Aorta (tissue), 5 donors: ENCODE measurements at regions of chr1 and their contacts with region 1.

Region 1: DNA sequence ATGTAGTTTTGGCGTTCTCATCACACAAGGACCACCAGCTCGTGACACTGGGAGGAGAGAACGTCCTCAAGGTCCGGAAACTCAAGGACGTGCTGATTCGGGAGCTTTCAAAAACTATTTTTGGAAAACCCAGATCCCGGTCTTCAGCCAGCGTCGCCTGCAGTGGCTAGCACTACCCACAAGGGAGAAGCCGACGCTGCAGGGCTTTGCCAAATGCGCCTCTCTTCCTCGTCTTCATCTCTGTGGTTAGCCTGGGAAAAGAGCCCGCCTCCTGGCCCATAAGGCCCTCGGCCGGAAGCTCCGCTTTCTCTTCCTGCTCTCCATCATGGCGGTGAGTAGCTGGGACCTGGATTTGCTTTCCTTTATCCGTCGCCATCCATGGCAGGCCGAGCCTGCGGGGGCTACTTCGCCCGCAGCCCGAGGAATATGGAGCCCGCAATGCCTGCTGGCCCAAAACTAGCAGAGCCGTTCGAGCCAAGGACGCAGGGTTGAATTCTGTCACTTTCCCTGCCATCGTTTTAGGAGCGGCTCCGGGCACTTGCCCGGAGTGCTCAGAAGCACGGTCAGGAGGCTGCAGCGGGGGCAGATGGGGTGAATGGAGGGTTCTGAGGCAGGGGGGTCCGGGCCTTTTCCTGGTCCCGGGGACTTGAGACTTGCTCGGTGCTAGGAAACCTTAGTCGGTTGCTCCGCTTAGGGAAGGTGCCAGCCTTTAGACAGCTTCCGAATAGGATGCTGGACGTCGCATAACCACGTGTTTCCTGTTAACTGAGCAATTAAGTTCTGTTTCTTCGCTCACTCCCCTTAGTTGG is at the start of gene RPL11:
- DNase-seq: peak; percentile 96 to 97
- ATAC-seq: peak; percentile 100
- H3K4me3 ChIP-seq: peak within 1 kb of the TSS; percentile 85 to 96
- H3K27ac ChIP-seq: peak within 1 kb of the TSS; percentile 67 to 82
- H3K4me1 ChIP-seq: peaks cover 0 to 3% of the 10 kb centered on the region in 2 donors
- H3K27me3 ChIP-seq: no peaks in the 10 kb centered on the region
- total RNA-seq, gene RPL11: 707 to 819 TPM

Region 2: GRCh38 chr1:23709229-23709628 is 17.5 kb after region 1 on chr1:
- intact Hi-C with region 1: no loop called
- DNase-seq: no peak
- ATAC-seq: no peak
- H3K4me3 ChIP-seq: no peak overlapping the region
- H3K27ac ChIP-seq: no peak overlapping the region
- H3K4me1 ChIP-seq: no peaks in the 10 kb centered on the region
- H3K27me3 ChIP-seq: no peaks in the 10 kb centered on the region

Region 3: DNA sequence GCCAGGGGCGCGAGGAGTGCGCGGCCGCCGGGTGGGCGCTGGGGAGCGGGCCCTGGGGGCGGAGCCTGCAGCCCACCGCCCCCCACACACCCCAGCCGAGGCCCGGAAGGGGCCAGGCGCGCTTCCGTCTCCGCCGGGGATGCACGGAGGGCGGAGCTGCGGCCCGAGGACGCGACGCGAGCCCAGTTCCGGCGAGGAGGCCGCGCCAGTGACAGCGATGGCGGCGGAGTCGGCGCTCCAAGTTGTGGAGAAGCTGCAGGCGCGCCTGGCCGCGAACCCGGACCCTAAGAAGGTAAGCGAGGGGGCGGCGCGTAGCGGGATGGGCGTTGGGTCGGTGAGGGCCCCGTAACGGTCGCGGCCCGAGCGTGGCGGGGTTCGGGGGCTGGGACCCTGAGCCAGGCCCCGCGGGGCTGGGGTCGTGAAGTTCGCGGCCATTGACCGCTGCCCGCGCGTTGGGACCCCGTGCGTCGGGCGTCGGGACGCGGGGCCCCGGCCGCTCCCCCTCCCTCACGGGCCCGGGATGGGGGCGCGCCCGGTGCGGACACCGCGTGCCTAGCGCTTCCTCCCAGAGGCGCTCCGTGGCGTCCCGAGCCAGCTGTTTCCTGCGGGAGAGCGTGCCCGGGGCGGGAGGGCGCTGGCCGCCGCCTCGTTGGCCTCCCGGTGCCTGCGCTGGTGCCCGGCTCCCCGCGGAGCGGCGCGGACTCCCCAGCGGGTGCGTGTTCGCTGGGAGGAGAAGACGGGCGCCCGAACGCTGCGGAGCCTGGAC is 51.8 kb after region 1 on chr1 and contains the start of gene ELOA:
- intact Hi-C with region 1: loop called in 1 of 2 experiments (anchors 5 kb)
- DNase-seq: peak; percentile 83 to 91
- ATAC-seq: peak; percentile 93
- H3K4me3 ChIP-seq: peak within 1 kb of the TSS; percentile 85 to 87
- H3K27ac ChIP-seq: peak within 1 kb of the TSS; percentile 53 to 78
- H3K4me1 ChIP-seq: peaks cover 2 to 3% of the 10 kb centered on the region in 2 donors
- H3K27me3 ChIP-seq: no peaks in the 10 kb centered on the region
- total RNA-seq, gene ELOA: 30.3 to 31.0 TPM